Activated naive CD4-positive, alpha-beta T cell treated with anti-CD3 and anti-CD28 coated beads for 36 hours (primary cell): ENCODE measurements at regions of chr17 and their contacts with region 1.

Region 1: GRCh38 chr17:49677933-49678847 is at the start of gene SPOP:
- DNase-seq: peak; percentile 100
- H3K4me3 Mint-ChIP-seq: peak within 1 kb of the TSS; percentile 93
- H3K27ac Mint-ChIP-seq: peak within 1 kb of the TSS; percentile 95
- H3K4me1 Mint-ChIP-seq: peaks cover 38% of the 10 kb centered on the region
- H3K27me3 Mint-ChIP-seq: no peaks in the 10 kb centered on the region
- total RNA-seq, gene SPOP: 66.9 to 69.2 TPM

Region 2: GRCh38 chr17:49361902-49362722 is 316.1 kb before region 1 on chr17 and contains the start of gene ZNF652:
- CTCF ChIA-PET with region 1: no interaction called
- intact Hi-C with region 1: loop called (anchors 1 kb)
- DNase-seq: peak; percentile 91
- H3K4me3 Mint-ChIP-seq: peak within 1 kb of the TSS; percentile 90
- H3K27ac Mint-ChIP-seq: peak within 1 kb of the TSS; percentile 93
- H3K4me1 Mint-ChIP-seq: peaks cover 37% of the 10 kb centered on the region
- H3K27me3 Mint-ChIP-seq: no peaks in the 10 kb centered on the region
- total RNA-seq, gene ZNF652: 5.5 to 5.8 TPM

Region 3: GRCh38 chr17:49575579-49576087 is 102.6 kb before region 1 on chr17 and contains the start of gene NXPH3:
- CTCF ChIA-PET with region 1: interaction called, 3 read pairs
- intact Hi-C with region 1: loop called (anchors 1 kb)
- DNase-seq: peak; percentile 77
- H3K4me3 Mint-ChIP-seq: peak within 1 kb of the TSS; percentile 76
- H3K27ac Mint-ChIP-seq: no peak within 1 kb of the TSS
- H3K4me1 Mint-ChIP-seq: peaks cover 15% of the 10 kb centered on the region
- H3K27me3 Mint-ChIP-seq: peaks cover 38% of the 10 kb centered on the region
- total RNA-seq, gene NXPH3: 0.25 to 0.26 TPM

Region 4: GRCh38 chr17:49646391-49647255 is 31.6 kb before region 1 on chr17:
- CTCF ChIA-PET with region 1: interaction called, 6 read pairs
- intact Hi-C with region 1: loop called (anchors 1 kb)
- DNase-seq: peak; percentile 81
- H3K4me3 Mint-ChIP-seq: no peak overlapping the region
- H3K27ac Mint-ChIP-seq: peak overlapping the region; percentile 76
- H3K4me1 Mint-ChIP-seq: peaks cover 63% of the 10 kb centered on the region
- H3K27me3 Mint-ChIP-seq: no peaks in the 10 kb centered on the region

Region 5: GRCh38 chr17:49748791-49749190 is 70.6 kb after region 1 on chr17:
- CTCF ChIA-PET with region 1: no interaction called
- intact Hi-C with region 1: loop called (anchors 1 kb)
- DNase-seq: peak; percentile 86
- H3K4me3 Mint-ChIP-seq: peak overlapping the region; percentile 14
- H3K27ac Mint-ChIP-seq: peak overlapping the region; percentile 91
- H3K4me1 Mint-ChIP-seq: peaks cover 78% of the 10 kb centered on the region
- H3K27me3 Mint-ChIP-seq: no peaks in the 10 kb centered on the region

Region 6: GRCh38 chr17:49815761-49816281 is 137.6 kb after region 1 on chr17:
- CTCF ChIA-PET with region 1: no interaction called
- intact Hi-C with region 1: no loop called
- DNase-seq: no peak
- H3K4me3 Mint-ChIP-seq: no peak overlapping the region
- H3K27ac Mint-ChIP-seq: peak overlapping the region; percentile 46
- H3K4me1 Mint-ChIP-seq: peaks cover 62% of the 10 kb centered on the region
- H3K27me3 Mint-ChIP-seq: no peaks in the 10 kb centered on the region

Region 7: GRCh38 chr17:50055426-50056230 is 377.4 kb after region 1 on chr17 and contains the start of gene ITGA3:
- CTCF ChIA-PET with region 1: no interaction called
- intact Hi-C with region 1: loop called (anchors 10 kb)
- DNase-seq: peak; percentile 85
- H3K4me3 Mint-ChIP-seq: peak within 1 kb of the TSS; percentile 87
- H3K27ac Mint-ChIP-seq: peak within 1 kb of the TSS; percentile 81
- H3K4me1 Mint-ChIP-seq: peaks cover 38% of the 10 kb centered on the region
- H3K27me3 Mint-ChIP-seq: no peaks in the 10 kb centered on the region
- total RNA-seq, gene ITGA3: 17.9 to 19.3 TPM